GM13976 (cell line): ENCODE measurements at regions of chr5 and their contacts with region 1.

Region 1: DNA sequence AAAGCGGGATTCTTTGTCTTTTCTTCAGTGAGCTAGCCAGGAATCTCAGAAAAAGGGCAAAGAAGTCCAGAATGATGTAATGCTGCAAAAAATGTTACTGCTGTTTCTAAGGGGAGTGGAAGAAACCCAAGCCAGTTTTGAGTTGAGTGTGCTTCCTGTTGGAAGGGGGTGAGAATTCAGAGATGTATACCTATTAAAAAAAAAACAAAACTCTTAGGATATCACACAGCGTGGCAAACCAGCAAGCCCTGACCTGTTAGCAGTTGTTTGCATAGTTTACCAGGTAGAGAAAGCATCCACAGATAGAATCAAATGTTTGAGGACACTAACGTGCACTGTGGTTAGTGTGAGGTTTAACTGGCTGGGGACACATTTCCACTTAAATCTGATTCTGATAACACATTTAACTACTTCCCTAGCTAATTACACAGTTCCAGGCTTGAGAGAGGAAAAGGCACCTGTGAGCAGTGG is 11.4 kb downstream of the BASP1 start:
- DNase-seq: peak; percentile 32
- CTCF ChIP-seq: no peak

Region 2: GRCh38 chr5:17276445-17276844 is 47.6 kb after region 1 on chr5:
- in situ Hi-C with region 1: loop called (anchors 10 kb)
- DNase-seq: peak; percentile 69
- CTCF ChIP-seq: no peak